Ascending aorta (tissue), 2 donors: ENCODE measurements at regions of chr12 and their contacts with region 1.

Region 1: GRCh38 chr12:27667540-27667939 is 28.7 kb upstream of the REP15 start:
- DNase-seq: peak; percentile 86 to 92
- H3K4me3 ChIP-seq: no peak overlapping the region
- H3K27ac ChIP-seq: peak overlapping the region; percentile 60 to 92
- H3K4me1 ChIP-seq: peaks cover 11 to 35% of the 10 kb centered on the region in 2 donors
- H3K27me3 ChIP-seq: no peaks in the 10 kb centered on the region
- CTCF ChIP-seq: no peak

Region 2: GRCh38 chr12:27751386-27752047 is 84.0 kb after region 1 on chr12:
- intact Hi-C with region 1: loop called (anchors 2 kb)
- DNase-seq: no peak
- H3K4me3 ChIP-seq: no peak overlapping the region
- H3K27ac ChIP-seq: no peak overlapping the region
- H3K4me1 ChIP-seq: peaks cover 4 to 19% of the 10 kb centered on the region in 2 donors
- H3K27me3 ChIP-seq: no peaks in the 10 kb centered on the region
- CTCF ChIP-seq: no peak

Region 3: DNA sequence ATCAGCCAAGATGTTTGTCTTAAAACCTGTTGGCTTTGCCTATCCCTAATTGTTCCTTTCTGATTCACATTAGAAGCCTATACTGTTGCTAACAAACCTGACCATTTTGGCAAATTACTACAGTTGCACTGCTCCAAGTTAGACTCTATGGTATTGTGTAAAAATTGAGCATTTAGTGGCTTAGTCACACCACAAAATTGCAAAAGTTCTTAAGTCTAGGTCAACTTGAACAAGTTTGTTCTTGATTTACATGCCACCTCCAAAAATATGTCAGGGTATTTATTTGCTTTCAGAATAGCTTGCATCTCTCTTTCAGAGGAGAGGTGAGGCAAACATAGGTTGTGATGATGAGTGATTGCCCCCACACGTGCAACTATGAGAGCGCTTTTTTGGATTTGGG is 332.0 kb after region 1 on chr12:
- intact Hi-C with region 1: no loop called
- DNase-seq: no peak
- H3K4me3 ChIP-seq: no peak overlapping the region
- H3K27ac ChIP-seq: no peak overlapping the region
- H3K4me1 ChIP-seq: no peaks in the 10 kb centered on the region
- H3K27me3 ChIP-seq: no peaks in the 10 kb centered on the region
- CTCF ChIP-seq: no peak